HepG2 (cell line): ENCODE measurements at regions of chr17 and their contacts with region 1.

Region 1: GRCh38 chr17:30336369-30337171 is 2.7 kb upstream of the TMIGD1 start:
- DNase-seq: peak; percentile 95
- ATAC-seq: peak; percentile 76
- H3K4me3 ChIP-seq: peak overlapping the region; percentile 44 to 63 (median 53); a peak in 5 of 6 replicates
- H3K27ac ChIP-seq: peak overlapping the region; percentile 94
- H3K4me1 ChIP-seq: peaks cover 85% of the 10 kb centered on the region
- H3K27me3 ChIP-seq: no peaks in the 10 kb centered on the region
- CTCF ChIP-seq: peak; percentile 80
- EP300 ChIP-seq: peak in 1 of 2 experiments; percentile 35; a peak in 1 of 4 replicates
- POLR2A ChIP-seq: peak; percentile 60 to 76
- RAD21 ChIP-seq: peak; percentile 84

Region 2: DNA sequence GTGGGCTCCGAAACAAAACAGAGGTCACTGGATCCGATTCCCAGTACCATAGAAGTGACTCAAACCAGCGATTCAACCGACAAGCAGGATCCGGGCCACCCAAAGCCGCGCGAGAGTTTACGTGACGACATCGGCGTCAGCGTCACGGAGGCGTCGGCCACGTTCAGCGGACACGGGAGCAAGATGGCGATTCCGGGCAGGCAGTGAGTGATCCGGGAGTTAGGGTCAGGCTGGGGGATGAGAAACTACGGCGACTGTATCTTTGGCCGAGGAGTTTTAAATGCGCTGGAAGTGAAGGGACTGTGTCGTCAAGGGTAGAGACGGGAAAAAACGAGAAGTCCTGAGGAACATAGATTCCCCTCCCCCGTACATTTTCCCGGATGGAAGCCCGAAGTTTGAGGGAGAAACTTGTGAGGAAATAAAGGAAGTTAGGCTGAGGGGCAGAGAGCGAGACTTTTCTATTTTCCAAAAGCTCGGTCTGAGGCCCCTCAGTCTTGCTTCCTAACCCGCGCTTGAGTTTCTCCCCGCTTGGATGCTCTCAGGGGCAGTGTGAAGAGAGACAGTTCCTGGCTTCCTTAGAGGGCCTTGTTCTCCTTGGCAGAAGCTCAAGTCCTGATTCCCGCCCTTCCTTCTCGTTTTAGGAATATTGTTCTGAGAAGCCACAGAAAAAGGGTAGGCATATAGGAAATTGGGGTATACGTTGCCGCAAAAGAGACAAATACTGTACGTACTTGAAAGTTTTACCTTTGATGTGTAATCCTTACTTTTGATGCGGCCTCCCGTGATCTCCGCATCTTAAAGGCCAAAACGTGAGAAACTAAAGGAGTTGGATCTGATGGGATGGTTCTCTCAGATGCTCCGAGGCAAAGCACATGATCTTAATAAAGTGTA is 219.7 kb before region 1 on chr17 and contains the start of gene NSRP1:
- CTCF ChIA-PET with region 1: no interaction called
- POLR2A ChIA-PET with region 1: interaction called, 12 read pairs
- in situ Hi-C with region 1: no loop called
- intact Hi-C with region 1: no loop called
- DNase-seq: peak; percentile 90
- ATAC-seq: peak; percentile 99
- H3K4me3 ChIP-seq: peak within 1 kb of the TSS; percentile 85 to 93 (median 91)
- H3K27ac ChIP-seq: peak within 1 kb of the TSS; percentile 87
- H3K4me1 ChIP-seq: peaks cover 47% of the 10 kb centered on the region
- H3K27me3 ChIP-seq: no peaks in the 10 kb centered on the region; a peak in 1 of 5 replicates
- CTCF ChIP-seq: peak; percentile 23; the same call in 1 of the 2 replicates
- EP300 ChIP-seq: 0 out of 4 replicates have a peak, but pooled peaks of 1 of the 2 experiments have one; percentile 14
- POLR2A ChIP-seq: peak; percentile 97 to 98
- RAD21 ChIP-seq: no peak
- total RNA-seq, gene NSRP1: 12.7 and 14.3 TPM in 2 replicates

Region 3: GRCh38 chr17:30134551-30134950 is 202.0 kb before region 1 on chr17:
- CTCF ChIA-PET with region 1: no interaction called
- POLR2A ChIA-PET with region 1: interaction called, 8 read pairs
- in situ Hi-C with region 1: loop called (anchors 5 kb)
- intact Hi-C with region 1: no loop called
- DNase-seq: no peak
- ATAC-seq: no peak
- H3K4me3 ChIP-seq: no peak overlapping the region
- H3K27ac ChIP-seq: no peak overlapping the region
- H3K4me1 ChIP-seq: no peaks in the 10 kb centered on the region
- H3K27me3 ChIP-seq: no peaks in the 10 kb centered on the region
- CTCF ChIP-seq: no peak
- EP300 ChIP-seq: no peak
- POLR2A ChIP-seq: no peak
- RAD21 ChIP-seq: no peak

Region 4: DNA sequence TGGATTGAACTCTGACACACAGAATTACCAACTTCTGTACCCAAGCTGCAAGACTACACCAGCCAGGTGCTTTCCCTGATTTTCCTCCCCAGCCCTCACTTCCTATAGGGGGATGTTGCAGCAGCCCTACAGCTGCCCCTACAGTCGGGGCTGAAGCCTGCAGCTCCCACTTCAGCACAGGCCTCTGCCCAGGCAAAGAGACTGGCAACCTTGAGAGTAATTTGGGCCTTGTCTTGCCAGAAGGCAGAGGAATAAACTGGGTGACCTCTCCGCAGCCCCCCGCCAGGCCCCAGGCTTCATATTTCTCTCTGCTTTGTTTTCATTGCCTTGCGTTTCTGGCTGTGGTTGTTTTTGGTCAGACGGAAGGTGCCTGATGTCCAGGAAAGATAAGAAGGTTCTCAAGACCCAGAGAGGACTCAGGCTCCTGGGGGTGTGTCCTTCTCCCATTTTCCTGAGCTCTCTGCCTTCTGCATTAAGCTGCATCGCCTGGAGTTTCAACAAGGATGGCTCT is 133.0 kb before region 1 on chr17:
- CTCF ChIA-PET with region 1: no interaction called
- POLR2A ChIA-PET with region 1: no interaction called
- in situ Hi-C with region 1: no loop called
- intact Hi-C with region 1: no loop called
- DNase-seq: no peak
- ATAC-seq: peak; percentile 49
- H3K4me3 ChIP-seq: no peak overlapping the region
- H3K27ac ChIP-seq: no peak overlapping the region
- H3K4me1 ChIP-seq: no peaks in the 10 kb centered on the region
- H3K27me3 ChIP-seq: no peaks in the 10 kb centered on the region
- CTCF ChIP-seq: no peak
- EP300 ChIP-seq: no peak
- POLR2A ChIP-seq: no peak
- RAD21 ChIP-seq: no peak

Region 5: DNA sequence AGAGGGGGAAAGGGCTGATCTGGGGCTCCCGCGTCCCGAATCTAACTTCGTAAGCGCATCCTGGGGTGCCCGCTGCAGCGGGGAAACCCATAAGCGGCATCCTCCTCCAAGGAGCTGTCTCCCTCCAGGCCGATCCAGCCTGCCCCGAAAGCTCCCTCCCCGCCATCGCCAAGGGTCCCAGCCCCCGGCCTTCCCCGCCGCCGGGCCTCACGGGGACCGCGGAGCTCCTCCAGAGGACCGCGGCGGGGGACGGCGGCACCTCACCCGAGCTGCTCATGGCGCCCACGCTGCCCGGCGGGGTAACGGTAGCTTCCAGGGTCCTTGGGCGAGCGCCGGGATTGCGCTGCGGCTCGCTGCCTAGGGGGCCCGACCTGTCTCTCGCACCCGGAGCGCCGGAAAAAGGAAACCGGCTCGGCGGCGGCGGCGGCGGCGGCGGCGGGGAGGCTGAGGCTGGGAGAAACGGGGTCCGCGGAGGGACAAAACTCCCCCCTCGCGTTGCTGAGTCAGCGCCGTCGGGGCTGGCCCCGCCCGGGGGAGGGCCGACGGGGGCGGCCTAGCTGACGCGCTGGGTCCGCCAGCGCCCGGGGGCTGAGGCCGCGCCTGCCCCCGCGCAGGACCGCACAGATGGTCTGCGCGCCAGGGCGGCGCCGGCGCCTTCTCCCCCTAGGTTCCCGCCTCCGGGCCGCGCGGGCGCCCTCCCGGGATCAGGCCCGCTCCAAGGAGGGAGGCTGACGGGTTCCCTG is 44.9 kb before region 1 on chr17 and contains the start of gene BLMH:
- CTCF ChIA-PET with region 1: no interaction called
- POLR2A ChIA-PET with region 1: interaction called, 22 read pairs
- in situ Hi-C with region 1: loop called (anchors 5 kb)
- intact Hi-C with region 1: loop called (anchors 1 kb)
- DNase-seq: peak; percentile 34
- ATAC-seq: peak; percentile 91
- H3K4me3 ChIP-seq: peak within 1 kb of the TSS; percentile 77 to 91 (median 79)
- H3K27ac ChIP-seq: peak within 1 kb of the TSS; percentile 53
- H3K4me1 ChIP-seq: peaks cover 23% of the 10 kb centered on the region
- H3K27me3 ChIP-seq: no peaks in the 10 kb centered on the region; a peak in 2 of 5 replicates
- CTCF ChIP-seq: 0 out of 2 replicates have a peak, but pooled peaks have one; percentile 6
- EP300 ChIP-seq: peak in 1 of 2 experiments; percentile 13; a peak in 1 of 4 replicates
- POLR2A ChIP-seq: peak; percentile 30 to 73; a peak in 3 of 4 replicates
- RAD21 ChIP-seq: no peak; the same call in 1 of the 2 replicates
- total RNA-seq, gene BLMH: 41.0 and 61.9 TPM in 2 replicates

Region 6: DNA sequence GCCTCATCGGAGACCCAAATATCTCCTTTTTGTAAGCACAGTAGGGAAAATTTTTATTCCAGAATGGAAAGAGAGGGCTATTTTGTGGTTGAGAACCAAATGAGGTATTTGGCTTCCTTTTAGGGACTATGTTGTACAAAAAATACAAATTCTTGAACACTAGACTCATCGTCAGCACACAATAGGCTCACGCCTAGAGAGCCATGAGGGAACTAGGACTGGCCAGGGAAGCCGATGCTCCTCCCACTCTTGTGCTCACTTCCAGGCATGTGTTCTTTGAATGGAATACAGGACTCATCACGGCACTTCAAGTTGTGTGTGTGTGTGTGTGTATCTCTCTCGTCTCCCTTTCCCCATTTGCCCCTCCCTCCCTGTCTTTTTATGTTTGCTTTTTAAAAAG is 27.0 kb before region 1 on chr17:
- CTCF ChIA-PET with region 1: no interaction called
- POLR2A ChIA-PET with region 1: no interaction called
- in situ Hi-C with region 1: no loop called
- intact Hi-C with region 1: no loop called
- DNase-seq: no peak
- ATAC-seq: no peak
- H3K4me3 ChIP-seq: no peak overlapping the region
- H3K27ac ChIP-seq: no peak overlapping the region
- H3K4me1 ChIP-seq: peaks cover under 1% of the 10 kb centered on the region; the same call in 1 of the 2 replicates
- H3K27me3 ChIP-seq: 0 out of 5 replicates have a peak, but pooled peaks cover 0 to under 1% of the 10 kb centered on the region in 2 experiments
- CTCF ChIP-seq: no peak
- EP300 ChIP-seq: no peak
- POLR2A ChIP-seq: no peak
- RAD21 ChIP-seq: no peak

Region 7: DNA sequence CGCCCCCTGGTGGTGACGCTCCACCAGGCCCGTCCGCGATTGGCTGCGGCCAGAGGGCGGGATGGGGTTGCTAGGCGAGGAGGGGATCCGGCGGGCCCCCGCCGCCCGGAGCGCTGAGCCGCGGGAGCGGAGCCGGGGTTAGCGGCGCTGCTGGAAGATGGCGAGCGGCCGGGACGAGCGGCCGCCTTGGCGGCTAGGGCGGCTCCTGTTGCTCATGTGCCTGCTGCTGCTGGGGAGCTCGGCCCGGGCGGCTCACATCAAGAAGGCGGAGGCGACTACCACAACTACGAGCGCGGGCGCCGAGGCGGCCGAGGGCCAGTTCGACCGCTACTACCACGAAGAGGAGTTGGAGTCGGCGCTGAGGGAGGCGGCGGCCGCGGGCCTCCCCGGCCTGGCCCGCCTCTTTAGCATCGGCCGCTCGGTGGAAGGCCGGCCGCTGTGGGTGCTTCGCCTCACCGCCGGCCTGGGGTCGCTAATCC is 42.3 kb after region 1 on chr17 and contains the start of gene CPD:
- CTCF ChIA-PET with region 1: interaction called, 3 read pairs
- POLR2A ChIA-PET with region 1: interaction called, 114 read pairs
- in situ Hi-C with region 1: loop called (anchors 5 kb)
- intact Hi-C with region 1: no loop called
- DNase-seq: peak; percentile 83
- ATAC-seq: peak; percentile 93
- H3K4me3 ChIP-seq: peak within 1 kb of the TSS; percentile 92 to 94 (median 92)
- H3K27ac ChIP-seq: peak within 1 kb of the TSS; percentile 68
- H3K4me1 ChIP-seq: peaks cover 65% of the 10 kb centered on the region
- H3K27me3 ChIP-seq: no peaks in the 10 kb centered on the region; a peak in 1 of 5 replicates
- CTCF ChIP-seq: no peak
- EP300 ChIP-seq: no peak
- POLR2A ChIP-seq: peak; percentile 81 to 84
- RAD21 ChIP-seq: peak; percentile 52
- total RNA-seq, gene CPD: 54.3 and 72.3 TPM in 2 replicates

Region 8: DNA sequence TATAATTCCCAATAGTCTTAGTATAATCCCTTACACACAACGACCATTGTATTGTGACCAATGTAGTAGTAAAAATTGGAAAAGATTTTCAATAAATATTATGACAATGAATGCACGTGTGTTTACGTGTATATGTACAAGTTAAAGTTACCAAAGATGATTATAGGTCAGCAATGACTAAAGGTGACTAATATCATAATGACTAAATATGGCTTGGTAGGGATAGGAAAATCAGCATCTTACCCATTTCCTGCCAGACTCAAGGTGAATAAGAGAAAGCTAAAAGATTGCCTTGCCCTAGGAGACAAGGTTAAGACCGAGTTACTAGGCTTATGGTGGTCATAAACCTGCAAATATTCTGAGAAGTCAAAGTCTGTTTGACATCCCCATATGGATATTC is 76.5 kb after region 1 on chr17:
- CTCF ChIA-PET with region 1: no interaction called
- POLR2A ChIA-PET with region 1: no interaction called
- in situ Hi-C with region 1: no loop called
- intact Hi-C with region 1: no loop called
- DNase-seq: no peak
- ATAC-seq: no peak
- H3K4me3 ChIP-seq: no peak overlapping the region
- H3K27ac ChIP-seq: no peak overlapping the region
- H3K4me1 ChIP-seq: peaks cover 35% of the 10 kb centered on the region
- H3K27me3 ChIP-seq: no peaks in the 10 kb centered on the region
- CTCF ChIP-seq: no peak
- EP300 ChIP-seq: no peak
- POLR2A ChIP-seq: no peak
- RAD21 ChIP-seq: no peak